ENCODE measurements at regions of chr7 and their contacts with region 1.

Region 1: DNA sequence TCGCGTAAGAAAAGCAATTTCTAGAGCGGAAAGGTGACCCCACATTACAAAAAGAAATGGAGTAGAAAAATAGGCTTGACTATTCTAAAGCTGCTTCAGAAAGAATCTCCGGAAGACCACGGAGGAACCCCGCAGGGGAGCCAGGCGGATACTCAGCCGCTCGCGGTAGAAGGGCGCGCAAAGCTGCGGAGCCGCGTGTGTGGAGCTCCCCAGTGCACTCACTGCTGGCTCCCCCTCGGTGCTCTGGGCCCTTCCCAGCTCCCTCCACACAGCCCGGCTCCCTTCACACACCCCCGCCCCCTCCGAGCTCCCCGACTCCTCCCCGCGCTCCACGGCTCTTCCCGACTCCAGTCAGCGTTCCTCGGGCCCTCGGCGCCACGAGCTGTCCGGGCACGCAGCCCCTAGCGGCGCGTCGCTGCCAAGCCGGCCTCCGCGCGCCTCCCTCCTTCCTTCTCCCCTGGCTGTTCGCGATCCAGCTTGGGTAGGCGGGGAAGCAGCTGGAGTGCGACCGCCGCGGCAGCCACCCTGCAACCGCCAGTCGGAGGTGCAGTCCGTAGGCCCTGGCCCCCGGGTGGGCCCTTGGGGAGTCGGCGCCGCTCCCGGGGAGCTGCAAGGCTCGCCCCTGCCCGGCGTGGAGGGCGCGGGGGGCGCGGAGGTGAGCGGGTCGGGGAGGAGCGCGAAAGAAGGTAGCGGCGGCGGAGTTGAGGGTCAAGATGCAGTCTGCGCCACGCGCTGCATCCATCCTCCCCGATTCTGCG is at the start of gene STEAP2:
- DNase-seq: peak; percentile 92
- ATAC-seq: peak; percentile 93
- H3K4me3 ChIP-seq: peak within 1 kb of the TSS; percentile 97
- H3K27ac ChIP-seq: peak within 1 kb of the TSS; percentile 24
- H3K4me1 ChIP-seq: peaks cover 23% of the 10 kb centered on the region
- H3K27me3 ChIP-seq: no peaks in the 10 kb centered on the region
- CTCF ChIP-seq: peak; percentile 60
- total RNA-seq, gene STEAP2: 4.7 and 7.0 TPM in 2 replicates

Region 2: DNA sequence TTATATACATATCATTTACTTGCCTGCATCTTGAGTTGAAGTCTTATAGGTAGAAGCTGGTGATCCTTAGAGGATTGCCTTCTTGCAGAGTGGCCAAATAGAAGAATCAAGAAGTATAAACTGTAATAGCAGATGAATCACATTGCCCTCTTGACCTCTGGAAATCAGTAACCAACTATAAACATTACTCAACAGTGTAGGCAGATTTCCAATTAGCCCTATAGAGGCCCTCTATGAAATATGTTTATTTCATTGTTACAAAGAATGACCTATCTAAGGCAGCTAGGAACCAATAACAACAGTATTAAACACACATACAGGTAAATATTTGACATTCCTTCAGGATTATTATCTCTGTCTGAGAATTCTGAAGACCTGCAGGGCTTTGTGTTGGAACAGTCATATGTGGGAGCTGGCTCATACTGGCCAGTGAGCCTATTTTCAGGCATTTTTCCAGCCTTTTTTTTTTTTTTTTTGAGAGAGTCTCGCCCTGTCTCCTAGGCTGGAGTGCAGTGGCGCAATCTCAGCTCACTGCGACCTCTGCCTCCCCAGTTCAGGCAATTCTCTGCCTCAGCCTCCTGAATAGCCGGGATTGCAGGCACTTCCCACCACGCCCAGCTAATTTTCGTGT is 1984.6 kb before region 1 on chr7:
- CTCF ChIA-PET with region 1: no interaction called
- POLR2A ChIA-PET with region 1: interaction called, 15 read pairs
- intact Hi-C with region 1: no loop called
- DNase-seq: peak; percentile 98
- ATAC-seq: peak; percentile 93
- H3K4me3 ChIP-seq: no peak overlapping the region
- H3K27ac ChIP-seq: peak overlapping the region; percentile 78
- H3K4me1 ChIP-seq: peaks cover 37% of the 10 kb centered on the region
- H3K27me3 ChIP-seq: no peaks in the 10 kb centered on the region
- CTCF ChIP-seq: no peak

Region 3: GRCh38 chr7:90155206-90155605 is 56.4 kb before region 1 on chr7:
- CTCF ChIA-PET with region 1: interaction called, 12 read pairs
- POLR2A ChIA-PET with region 1: interaction called, 4 read pairs
- intact Hi-C with region 1: loop called (anchors 1 kb)
- DNase-seq: no peak
- ATAC-seq: no peak
- H3K4me3 ChIP-seq: peak overlapping the region; percentile 86
- H3K27ac ChIP-seq: no peak overlapping the region
- H3K4me1 ChIP-seq: peaks cover 34% of the 10 kb centered on the region
- H3K27me3 ChIP-seq: no peaks in the 10 kb centered on the region
- CTCF ChIP-seq: no peak

Region 4: GRCh38 chr7:90178679-90179278 is 32.8 kb before region 1 on chr7:
- CTCF ChIA-PET with region 1: interaction called, 11 read pairs
- POLR2A ChIA-PET with region 1: interaction called, 12 read pairs
- intact Hi-C with region 1: loop called (anchors 1 kb)
- DNase-seq: peak; percentile 94
- ATAC-seq: peak; percentile 95
- H3K4me3 ChIP-seq: peak overlapping the region; percentile 37; the same call in 1 of the 2 replicates
- H3K27ac ChIP-seq: peak overlapping the region; percentile 78
- H3K4me1 ChIP-seq: peaks cover 35% of the 10 kb centered on the region
- H3K27me3 ChIP-seq: no peaks in the 10 kb centered on the region
- CTCF ChIP-seq: no peak

Region 5: DNA sequence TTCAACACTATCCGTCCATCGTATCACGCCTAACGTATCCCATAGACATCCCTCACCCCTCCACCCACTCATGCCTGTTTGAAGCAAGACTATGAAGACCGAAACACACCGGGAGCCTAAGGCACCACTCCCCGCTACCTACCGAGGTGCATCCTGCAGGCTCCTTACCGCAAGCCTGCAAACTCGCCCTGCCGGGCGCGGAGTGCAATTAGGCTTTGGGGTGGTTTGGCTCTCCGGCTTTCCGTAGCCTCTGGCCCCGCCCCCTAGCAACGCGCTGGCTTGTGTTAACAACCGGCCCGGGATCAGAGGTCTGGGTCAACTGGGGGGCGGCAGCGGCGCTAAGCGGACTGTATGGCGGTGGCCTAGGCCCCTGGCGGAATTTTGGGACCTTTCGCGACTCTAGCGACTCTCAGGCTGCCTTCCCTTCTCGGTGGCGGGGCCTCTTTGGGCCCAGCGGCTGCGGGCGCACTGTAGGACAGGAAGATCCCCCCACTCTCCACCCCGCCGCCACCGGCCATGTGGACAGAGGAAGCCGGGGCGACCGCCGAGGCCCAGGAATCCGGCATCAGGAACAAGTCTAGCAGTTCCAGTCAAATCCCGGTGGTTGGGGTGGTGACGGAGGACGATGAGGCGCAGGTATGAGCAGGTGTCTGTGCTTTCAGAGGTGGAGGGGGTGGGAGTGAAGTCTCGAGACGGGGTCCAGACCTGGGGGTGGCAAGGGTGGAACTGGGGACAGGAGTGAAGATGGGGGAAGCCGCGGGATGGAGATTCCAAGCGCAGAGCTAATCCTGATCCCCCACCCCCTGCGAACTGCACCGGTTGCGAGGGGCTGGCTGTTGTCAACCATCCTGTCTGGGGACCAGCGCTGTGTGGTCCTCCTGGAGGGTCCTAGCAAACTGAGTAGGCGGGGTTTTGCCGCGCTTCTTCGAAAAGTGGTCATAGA is 33.6 kb after region 1 on chr7 and contains the start of gene CFAP69:
- CTCF ChIA-PET with region 1: interaction called, 3 read pairs
- POLR2A ChIA-PET with region 1: interaction called, 4 read pairs
- intact Hi-C with region 1: loop called (anchors 1 kb)
- DNase-seq: peak; percentile 85
- ATAC-seq: peak; percentile 88
- H3K4me3 ChIP-seq: peak within 1 kb of the TSS; percentile 97
- H3K27ac ChIP-seq: no peak within 1 kb of the TSS
- H3K4me1 ChIP-seq: peaks cover 25% of the 10 kb centered on the region
- H3K27me3 ChIP-seq: no peaks in the 10 kb centered on the region
- CTCF ChIP-seq: no peak
- total RNA-seq, gene CFAP69: 3.1 and 6.6 TPM in 2 replicates

Region 6: GRCh38 chr7:90262438-90262837 is 50.9 kb after region 1 on chr7:
- CTCF ChIA-PET with region 1: interaction called, 4 read pairs
- POLR2A ChIA-PET with region 1: interaction called, 7 read pairs
- intact Hi-C with region 1: loop called (anchors 2 kb)
- DNase-seq: peak; percentile 70
- ATAC-seq: peak; percentile 82
- H3K4me3 ChIP-seq: no peak overlapping the region
- H3K27ac ChIP-seq: no peak overlapping the region
- H3K4me1 ChIP-seq: peaks cover 9% of the 10 kb centered on the region
- H3K27me3 ChIP-seq: no peaks in the 10 kb centered on the region
- CTCF ChIP-seq: peak; percentile 57

Region 7: GRCh38 chr7:90334193-90334843 is 122.7 kb after region 1 on chr7:
- CTCF ChIA-PET with region 1: no interaction called
- POLR2A ChIA-PET with region 1: no interaction called
- intact Hi-C with region 1: no loop called
- DNase-seq: no peak
- ATAC-seq: no peak
- H3K4me3 ChIP-seq: no peak overlapping the region
- H3K27ac ChIP-seq: no peak overlapping the region
- H3K4me1 ChIP-seq: no peaks in the 10 kb centered on the region
- H3K27me3 ChIP-seq: no peaks in the 10 kb centered on the region
- CTCF ChIP-seq: no peak

Region 8: DNA sequence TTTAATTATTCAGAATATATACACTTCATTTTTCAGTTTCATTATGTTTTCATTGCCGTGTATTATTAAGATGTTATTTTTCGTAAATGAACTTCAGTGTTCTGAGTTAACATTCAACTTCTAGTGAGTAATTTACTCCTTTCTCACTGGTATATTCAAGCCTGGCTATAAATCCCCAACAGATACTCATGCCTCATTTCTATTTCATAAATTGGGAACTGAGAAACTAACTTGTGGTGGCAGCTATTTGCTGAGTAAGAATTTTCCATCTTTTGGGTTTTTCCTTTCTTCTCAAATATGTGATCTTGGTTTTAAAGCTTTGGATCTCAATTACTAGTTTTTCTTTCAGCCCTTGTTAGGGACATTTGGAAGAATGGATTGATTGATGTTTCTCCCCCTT is 665.6 kb after region 1 on chr7:
- CTCF ChIA-PET with region 1: no interaction called
- POLR2A ChIA-PET with region 1: interaction called, 18 read pairs
- intact Hi-C with region 1: no loop called
- DNase-seq: no peak
- ATAC-seq: no peak
- H3K4me3 ChIP-seq: no peak overlapping the region
- H3K27ac ChIP-seq: no peak overlapping the region
- H3K4me1 ChIP-seq: no peaks in the 10 kb centered on the region
- H3K27me3 ChIP-seq: no peaks in the 10 kb centered on the region
- CTCF ChIP-seq: no peak

Measured in PC-3 (cell line).